ENCODE measurements at regions of chr17 and their contacts with region 1.

Region 1: GRCh38 chr17:60641810-60642220 is 35.8 kb upstream of the BCAS3 start:
- DNase-seq: peak; percentile 78
- H3K4me3 ChIP-seq: no peak overlapping the region
- H3K27ac ChIP-seq: no peak overlapping the region
- H3K4me1 ChIP-seq: peaks cover 0 to 22% (median 9%) of the 10 kb centered on the region in 4 donors
- H3K27me3 ChIP-seq: no peaks in the 10 kb centered on the region
- CTCF ChIP-seq: peak in 3 of 4 experiments; percentile 24 to 44 (median 32)
- EP300 ChIP-seq: no peak
- POLR2A ChIP-seq: no peak

Region 2: GRCh38 chr17:60577147-60577915 is 64.5 kb before region 1 on chr17:
- intact Hi-C with region 1: loop called (anchors 1 kb)
- DNase-seq: peak; percentile 74
- H3K4me3 ChIP-seq: peak overlapping the region; percentile 20 to 50 (median 39)
- H3K27ac ChIP-seq: peak overlapping the region; percentile 73 to 88 (median 82)
- H3K4me1 ChIP-seq: peaks cover 0 to 39% (median 25%) of the 10 kb centered on the region in 4 donors
- H3K27me3 ChIP-seq: no peaks in the 10 kb centered on the region
- CTCF ChIP-seq: peak in 3 of 4 experiments; percentile 7 to 33 (median 25)
- EP300 ChIP-seq: no peak
- POLR2A ChIP-seq: no peak

Measured in sigmoid colon (tissue), 7 donors.